ENCODE measurements at regions of chr1 and their contacts with region 1.

Region 1: GRCh38 chr1:32900371-32900950 is 728 bp downstream of the TMEM54 start:
- DNase-seq: no peak
- CTCF ChIP-seq: no peak

Region 2: GRCh38 chr1:32855861-32856617 is 44.4 kb before region 1 on chr1:
- CTCF ChIA-PET with region 1: no interaction called
- POLR2A ChIA-PET with region 1: no interaction called
- DNase-seq: no peak
- CTCF ChIP-seq: no peak

Region 3: DNA sequence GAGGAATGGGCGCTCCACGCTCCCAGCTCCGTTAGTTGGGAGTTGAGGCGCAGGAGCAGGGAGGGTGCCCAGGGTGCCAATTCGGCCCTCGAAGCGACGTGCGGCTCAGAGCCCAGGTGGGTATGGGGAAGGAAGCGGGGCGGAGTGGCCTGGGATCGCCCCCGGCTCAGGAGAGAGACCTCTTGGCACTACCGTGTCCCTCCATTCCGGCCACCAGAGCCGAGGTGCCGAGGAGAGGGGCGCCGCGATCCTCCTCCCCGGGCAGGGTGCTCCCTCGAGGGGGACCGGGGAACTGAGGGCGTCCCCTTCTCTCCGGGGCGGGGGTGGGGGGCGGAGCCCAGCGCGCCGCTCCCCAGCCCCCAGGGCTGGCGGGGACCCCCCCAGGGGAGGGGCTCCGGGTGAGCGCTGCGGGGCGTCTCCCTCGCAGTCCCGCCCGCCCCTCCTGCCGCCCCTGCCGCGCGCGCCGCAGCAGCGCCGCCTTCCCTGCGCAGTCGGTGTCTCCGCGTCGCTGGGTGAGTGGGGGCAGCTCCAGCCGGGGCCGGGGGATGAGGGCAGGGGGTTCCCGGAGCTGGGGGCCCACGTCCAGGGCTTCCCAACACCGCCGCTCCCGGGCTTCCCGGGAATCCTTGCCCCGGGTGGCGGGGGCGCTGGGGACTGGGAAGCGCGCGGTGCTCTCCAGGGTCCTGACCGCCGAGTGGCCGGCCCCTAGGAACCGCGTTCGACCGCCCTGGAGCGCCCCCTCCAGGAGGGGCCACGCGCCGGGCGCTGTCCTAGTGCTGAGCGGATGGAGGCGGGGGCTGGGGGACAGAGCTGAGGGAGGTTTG is 14.2 kb before region 1 on chr1 and contains the start of gene HPCA:
- CTCF ChIA-PET with region 1: interaction called, 10 read pairs
- POLR2A ChIA-PET with region 1: no interaction called
- DNase-seq: peak; percentile 70
- CTCF ChIP-seq: peak; percentile 59

Measured in GM10248 (cell line).